ENCODE measurements at regions of chr3 and their contacts with region 1.

Region 1: GRCh38 chr3:52892625-52893311 is 4.6 kb downstream of the STIMATE start:
- DNase-seq: peak; percentile 35
- ATAC-seq: peak; percentile 6
- H3K4me3 Mint-ChIP-seq: peak overlapping the region; percentile 65
- H3K27ac Mint-ChIP-seq: peak overlapping the region; percentile 93
- H3K4me1 Mint-ChIP-seq: peaks cover 68% of the 10 kb centered on the region
- H3K27me3 Mint-ChIP-seq: no peaks in the 10 kb centered on the region
- CTCF ChIP-seq: peak; percentile 47

Region 2: GRCh38 chr3:52873433-52874159 is 19.2 kb before region 1 on chr3:
- CTCF ChIA-PET with region 1: interaction called, 10 read pairs
- POLR2A ChIA-PET with region 1: interaction called, 10 read pairs
- intact Hi-C with region 1: no loop called
- DNase-seq: no peak
- ATAC-seq: peak; percentile 38
- H3K4me3 Mint-ChIP-seq: no peak overlapping the region
- H3K27ac Mint-ChIP-seq: no peak overlapping the region
- H3K4me1 Mint-ChIP-seq: peaks cover 41% of the 10 kb centered on the region
- H3K27me3 Mint-ChIP-seq: no peaks in the 10 kb centered on the region
- CTCF ChIP-seq: no peak

Region 3: DNA sequence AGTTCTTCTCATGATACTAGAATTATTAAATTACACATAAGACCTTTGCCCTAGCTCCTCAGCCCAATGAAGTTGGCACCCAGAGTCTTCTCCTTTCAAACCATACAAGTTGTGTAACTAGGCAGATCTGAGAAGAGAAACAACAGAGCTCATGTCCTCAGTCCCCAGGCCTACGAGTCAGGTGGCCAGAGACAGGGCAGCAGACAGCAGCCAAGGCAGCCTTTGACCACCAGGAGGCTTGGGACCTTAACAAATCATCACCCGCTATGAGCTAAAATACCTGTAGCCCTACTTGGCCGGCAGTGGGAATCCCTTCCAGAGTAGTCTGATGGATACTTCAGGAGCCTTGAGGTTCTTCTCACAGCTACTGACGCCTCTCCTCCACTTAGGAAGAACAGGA is 13.7 kb before region 1 on chr3:
- CTCF ChIA-PET with region 1: interaction called, 10 read pairs
- POLR2A ChIA-PET with region 1: interaction called, 10 read pairs
- intact Hi-C with region 1: no loop called
- DNase-seq: no peak
- ATAC-seq: no peak
- H3K4me3 Mint-ChIP-seq: no peak overlapping the region
- H3K27ac Mint-ChIP-seq: no peak overlapping the region
- H3K4me1 Mint-ChIP-seq: peaks cover 31% of the 10 kb centered on the region
- H3K27me3 Mint-ChIP-seq: no peaks in the 10 kb centered on the region
- CTCF ChIP-seq: no peak

Region 4: DNA sequence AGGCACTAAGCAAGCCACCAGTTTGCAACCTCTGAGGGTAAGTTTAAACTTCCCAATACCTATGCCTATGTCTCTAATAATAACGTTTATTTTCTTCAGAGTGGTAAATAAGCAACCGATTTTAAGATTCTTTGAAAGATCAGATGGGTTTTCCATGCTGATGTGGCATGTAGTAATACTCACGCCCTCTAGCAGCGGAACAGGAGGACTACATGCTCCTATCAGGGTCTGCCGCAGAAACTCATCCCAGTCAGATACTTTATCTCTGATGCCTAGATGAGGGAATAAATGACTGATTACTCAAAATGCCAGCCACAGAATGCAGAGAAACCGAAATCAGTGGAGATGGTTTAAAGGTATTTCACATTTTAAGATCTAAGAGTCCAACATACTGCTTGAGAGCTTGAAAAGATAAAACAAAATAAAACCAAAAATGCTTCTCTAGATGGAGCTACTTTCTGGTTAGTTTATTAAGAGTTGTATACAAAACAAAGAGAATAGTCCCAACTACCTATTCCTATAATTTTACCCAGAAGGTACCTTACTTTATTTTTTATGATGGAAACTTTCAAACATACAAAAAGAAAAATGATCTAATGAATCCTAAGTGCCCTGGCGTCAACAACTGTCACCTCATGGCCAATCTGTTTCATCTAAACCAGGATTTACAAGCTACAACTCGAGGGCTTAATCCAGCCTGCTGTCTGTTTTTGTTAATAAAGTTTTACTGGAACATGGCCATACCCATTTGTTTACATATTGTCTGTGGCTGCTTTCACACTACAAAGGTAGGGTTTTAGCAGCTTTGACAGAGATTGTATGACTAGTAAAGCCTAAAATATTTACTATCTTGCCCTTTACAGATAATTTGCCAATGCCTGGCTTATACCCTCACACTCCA is 42.1 kb after region 1 on chr3:
- CTCF ChIA-PET with region 1: interaction called, 18 read pairs
- POLR2A ChIA-PET with region 1: no interaction called
- intact Hi-C with region 1: no loop called
- DNase-seq: peak; percentile 71
- ATAC-seq: peak; percentile 99
- H3K4me3 Mint-ChIP-seq: no peak overlapping the region
- H3K27ac Mint-ChIP-seq: peak overlapping the region; percentile 36
- H3K4me1 Mint-ChIP-seq: peaks cover 6% of the 10 kb centered on the region
- H3K27me3 Mint-ChIP-seq: no peaks in the 10 kb centered on the region
- CTCF ChIP-seq: peak; percentile 79